ENCODE measurements at regions of chr6 and their contacts with region 1.

Region 1: GRCh38 chr6:2853761-2854395 is 12.2 kb upstream of the SERPINB1 start:
- DNase-seq: peak; percentile 94
- ATAC-seq: peak; percentile 57
- H3K4me3 Mint-ChIP-seq: peak overlapping the region; percentile 62
- H3K27ac Mint-ChIP-seq: peak overlapping the region; percentile 100
- H3K4me1 Mint-ChIP-seq: peaks cover 66% of the 10 kb centered on the region
- H3K27me3 Mint-ChIP-seq: no peaks in the 10 kb centered on the region

Region 2: DNA sequence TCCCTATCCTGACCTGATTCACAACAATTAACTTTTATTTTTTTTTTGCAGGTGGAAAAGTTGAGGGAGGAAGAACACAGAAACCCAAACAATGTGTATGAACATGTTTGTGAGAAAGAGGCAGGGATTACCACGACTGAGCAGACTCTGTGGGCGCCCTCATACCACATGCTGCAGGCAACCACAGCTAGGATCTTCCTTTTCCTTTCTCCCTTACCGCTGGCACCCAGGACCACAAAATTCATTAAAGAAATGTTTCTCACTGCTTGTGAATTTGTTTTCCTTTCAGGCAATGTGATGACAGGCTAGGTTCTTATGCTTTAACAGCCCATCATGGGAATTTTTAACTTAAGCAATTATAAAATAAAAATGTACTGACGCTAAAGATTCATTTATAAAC is 895.6 kb before region 1 on chr6:
- CTCF ChIA-PET with region 1: no interaction called
- POLR2A ChIA-PET with region 1: no interaction called
- intact Hi-C with region 1: no loop called
- DNase-seq: no peak
- ATAC-seq: no peak
- H3K4me3 Mint-ChIP-seq: no peak overlapping the region
- H3K27ac Mint-ChIP-seq: no peak overlapping the region
- H3K4me1 Mint-ChIP-seq: no peaks in the 10 kb centered on the region
- H3K27me3 Mint-ChIP-seq: no peaks in the 10 kb centered on the region

Region 3: GRCh38 chr6:2841264-2842138 is 12.4 kb before region 1 on chr6 and contains the start of gene SERPINB1:
- CTCF ChIA-PET with region 1: interaction called, 37 read pairs
- POLR2A ChIA-PET with region 1: interaction called, 30 read pairs
- intact Hi-C with region 1: loop called (anchors 1 kb)
- DNase-seq: peak; percentile 96
- ATAC-seq: peak; percentile 86
- H3K4me3 Mint-ChIP-seq: peak within 1 kb of the TSS; percentile 96
- H3K27ac Mint-ChIP-seq: peak within 1 kb of the TSS; percentile 91
- H3K4me1 Mint-ChIP-seq: peaks cover 67% of the 10 kb centered on the region
- H3K27me3 Mint-ChIP-seq: no peaks in the 10 kb centered on the region
- total RNA-seq, gene SERPINB1: 200 to 243 TPM

Region 4: DNA sequence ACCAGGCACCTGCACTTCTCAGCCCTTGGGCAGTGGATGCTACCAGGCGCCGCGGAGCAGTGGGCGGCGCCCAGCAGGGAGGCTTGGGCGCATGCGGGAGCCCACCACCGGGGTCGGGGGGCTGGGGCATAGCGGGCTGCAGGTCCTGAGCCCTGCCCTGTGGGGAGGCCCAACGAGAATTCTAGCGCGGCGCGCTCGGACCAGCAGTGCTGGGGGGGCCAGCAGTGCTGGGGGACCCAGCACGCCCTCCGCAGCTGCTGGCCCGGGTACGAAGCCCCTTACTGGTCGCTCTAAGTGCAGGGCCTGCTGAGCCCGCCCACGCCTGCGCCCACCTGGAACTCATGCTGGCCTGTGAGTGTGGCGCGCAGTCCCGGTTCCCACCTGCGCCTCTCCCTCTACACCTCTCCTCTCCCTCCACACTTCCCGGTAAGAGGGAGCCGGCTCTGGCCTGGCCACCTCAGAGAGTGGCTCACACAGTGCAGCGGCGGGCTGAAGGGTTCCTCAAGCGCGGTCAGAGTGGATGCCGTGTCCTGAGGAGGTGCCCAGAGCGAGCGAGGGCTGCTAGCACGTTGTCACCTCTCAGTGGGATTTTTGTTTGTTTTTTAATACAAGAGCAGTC is 16.3 kb after region 1 on chr6:
- CTCF ChIA-PET with region 1: interaction called, 12 read pairs
- POLR2A ChIA-PET with region 1: interaction called, 31 read pairs
- intact Hi-C with region 1: no loop called
- DNase-seq: no peak
- ATAC-seq: no peak
- H3K4me3 Mint-ChIP-seq: no peak overlapping the region
- H3K27ac Mint-ChIP-seq: no peak overlapping the region
- H3K4me1 Mint-ChIP-seq: peaks cover 69% of the 10 kb centered on the region
- H3K27me3 Mint-ChIP-seq: no peaks in the 10 kb centered on the region

Region 5: GRCh38 chr6:2876210-2877056 is 22.6 kb after region 1 on chr6:
- CTCF ChIA-PET with region 1: interaction called, 3 read pairs
- POLR2A ChIA-PET with region 1: interaction called, 5 read pairs
- intact Hi-C with region 1: loop called in 1 of 2 experiments (anchors 2 kb)
- DNase-seq: no peak
- ATAC-seq: peak; percentile 51
- H3K4me3 Mint-ChIP-seq: peak overlapping the region; percentile 74
- H3K27ac Mint-ChIP-seq: peak overlapping the region; percentile 87
- H3K4me1 Mint-ChIP-seq: peaks cover 81% of the 10 kb centered on the region
- H3K27me3 Mint-ChIP-seq: no peaks in the 10 kb centered on the region

Region 6: DNA sequence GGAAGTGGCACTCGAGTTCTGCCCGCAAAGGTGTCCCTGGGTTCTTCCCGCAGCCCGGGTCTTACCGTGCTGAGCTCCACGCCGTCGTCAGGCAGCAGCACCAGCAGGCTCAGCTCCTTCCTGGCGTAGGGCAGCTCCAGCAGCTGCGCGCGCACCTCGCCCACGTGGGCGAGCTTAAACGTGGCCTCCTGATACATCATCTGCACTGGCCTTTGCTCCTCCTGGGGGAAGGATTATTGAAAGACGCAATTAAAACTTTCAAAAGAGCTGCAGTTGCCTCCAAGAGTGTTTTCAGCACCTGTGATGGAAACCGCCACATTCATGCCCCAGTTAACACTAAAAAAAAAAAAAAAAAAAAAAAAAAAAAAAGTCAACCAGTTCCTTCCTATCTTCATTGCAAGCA is 37.9 kb after region 1 on chr6:
- CTCF ChIA-PET with region 1: interaction called, 3 read pairs
- POLR2A ChIA-PET with region 1: interaction called, 8 read pairs
- intact Hi-C with region 1: loop called in 1 of 2 experiments (anchors 5 kb)
- DNase-seq: peak; percentile 88
- ATAC-seq: peak; percentile 91
- H3K4me3 Mint-ChIP-seq: peak overlapping the region; percentile 73
- H3K27ac Mint-ChIP-seq: peak overlapping the region; percentile 85
- H3K4me1 Mint-ChIP-seq: peaks cover 65% of the 10 kb centered on the region
- H3K27me3 Mint-ChIP-seq: no peaks in the 10 kb centered on the region

Region 7: GRCh38 chr6:2900821-2901644 is 47.2 kb after region 1 on chr6:
- CTCF ChIA-PET with region 1: interaction called, 3 read pairs
- POLR2A ChIA-PET with region 1: interaction called, 4 read pairs
- intact Hi-C with region 1: loop called in 1 of 2 experiments (anchors 1 kb)
- DNase-seq: peak; percentile 26
- ATAC-seq: no peak
- H3K4me3 Mint-ChIP-seq: peak overlapping the region; percentile 91
- H3K27ac Mint-ChIP-seq: peak overlapping the region; percentile 93
- H3K4me1 Mint-ChIP-seq: peaks cover 45% of the 10 kb centered on the region
- H3K27me3 Mint-ChIP-seq: no peaks in the 10 kb centered on the region